GM13976 (cell line): ENCODE measurements at regions of chr4 and their contacts with region 1.

Region 1: DNA sequence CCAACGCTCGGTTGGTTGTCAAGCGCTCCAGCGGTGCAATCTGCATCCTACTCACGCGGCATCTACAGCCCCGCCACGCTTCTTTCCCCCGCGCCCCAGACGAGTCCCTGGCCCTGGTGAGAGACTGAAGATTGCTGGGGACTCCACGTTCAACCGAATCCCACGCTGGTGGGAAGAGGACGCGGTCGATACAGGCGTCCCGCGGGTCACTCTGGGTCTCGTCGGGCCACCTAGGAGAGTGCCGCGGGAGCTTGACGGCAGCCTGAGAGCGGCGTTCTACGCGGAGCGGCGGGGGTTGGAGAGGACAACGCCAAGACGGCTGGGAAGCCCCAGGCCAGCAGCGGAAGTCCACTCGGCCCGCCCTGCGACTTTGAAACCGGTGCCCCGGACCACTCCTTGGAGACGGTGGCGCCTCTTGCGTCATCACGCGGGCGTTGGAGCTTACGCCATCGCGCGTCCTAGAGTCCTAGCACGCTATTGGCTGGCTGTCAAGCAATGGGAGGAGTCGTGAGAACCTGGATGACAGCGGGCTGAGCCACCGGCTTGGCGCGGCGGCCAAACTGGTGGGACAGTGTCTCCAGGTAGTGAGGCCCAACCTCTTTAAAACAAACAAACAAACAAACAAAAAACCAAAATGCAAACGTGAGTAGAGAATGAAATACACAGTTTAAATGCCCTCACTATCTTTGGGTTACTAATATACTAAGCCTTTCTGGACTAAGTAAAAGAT is at the start of gene SCLT1:
- DNase-seq: peak; percentile 92
- CTCF ChIP-seq: no peak

Region 2: DNA sequence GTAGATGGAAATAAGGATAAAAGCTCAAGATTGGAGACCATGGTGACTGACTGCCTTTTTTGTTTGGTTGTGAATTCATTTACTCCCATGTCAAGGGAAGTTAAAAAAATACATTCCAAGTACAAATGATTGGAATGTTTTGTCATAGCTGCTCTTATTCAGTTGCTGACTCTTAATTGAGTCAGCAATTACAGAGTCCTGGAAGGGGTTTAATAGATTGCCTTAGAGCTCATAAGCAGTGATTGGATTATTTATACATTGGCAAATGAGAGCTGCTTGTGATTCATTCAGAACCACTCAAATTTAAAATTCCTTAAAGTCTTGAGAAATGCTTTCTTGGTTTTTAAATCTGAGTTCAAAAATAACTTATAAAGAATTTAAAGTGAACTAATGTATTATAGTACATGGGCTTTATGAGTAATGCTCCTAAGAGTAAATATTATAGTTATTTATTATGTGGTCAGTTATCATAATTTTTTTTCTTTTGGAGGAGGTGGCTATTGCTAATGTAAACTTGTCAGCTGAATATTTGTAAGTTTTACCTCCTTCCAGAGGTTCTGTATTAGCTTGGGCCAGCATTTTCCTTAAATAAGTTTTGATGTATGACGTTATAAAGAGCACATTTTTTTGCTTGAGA is 270.2 kb before region 1 on chr4:
- in situ Hi-C with region 1: loop called (anchors 10 kb)
- DNase-seq: no peak
- CTCF ChIP-seq: no peak

Region 3: DNA sequence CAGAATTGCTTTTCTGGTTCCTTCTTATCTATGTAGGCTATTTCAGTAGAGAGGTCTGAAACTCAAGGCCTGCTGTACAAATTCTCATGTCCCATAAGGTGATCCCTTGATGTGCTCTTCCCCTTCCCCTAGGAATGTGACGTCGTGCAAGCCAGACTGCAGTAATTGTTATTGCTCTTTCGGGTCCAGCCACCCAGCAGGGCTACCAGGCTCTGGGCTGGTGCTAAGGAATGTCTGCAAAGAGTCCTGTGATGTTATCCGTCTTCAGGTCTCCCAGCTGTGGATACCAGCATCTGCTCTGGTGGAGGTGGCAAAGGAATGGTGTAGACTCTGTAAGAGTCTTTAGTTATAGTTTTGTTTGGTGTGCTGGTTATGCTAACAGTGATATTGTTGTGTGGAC is 381.3 kb after region 1 on chr4:
- in situ Hi-C with region 1: no loop called
- DNase-seq: no peak
- CTCF ChIP-seq: no peak